GM12878 (cell line): ENCODE measurements at regions of chr6 and their contacts with region 1.

Region 1: GRCh38 chr6:137707590-137708360 is 159.3 kb upstream of the TNFAIP3 start:
- DNase-seq: peak; percentile 97
- ATAC-seq: peak; percentile 75
- H3K4me3 ChIP-seq: peak overlapping the region; percentile 49; the same call in 1 of the 2 replicates
- H3K27ac ChIP-seq: peak overlapping the region; percentile 64
- H3K4me1 ChIP-seq: peaks cover 39% of the 10 kb centered on the region
- H3K27me3 ChIP-seq: no peaks in the 10 kb centered on the region
- CTCF ChIP-seq: peak; percentile 67 to 88 (median 83); a peak in 5 of 6 replicates
- EP300 ChIP-seq: peak; percentile 33 to 57; a peak in 2 of 4 replicates
- POLR2A ChIP-seq: no peak
- RAD21 ChIP-seq: peak; percentile 91

Region 2: DNA sequence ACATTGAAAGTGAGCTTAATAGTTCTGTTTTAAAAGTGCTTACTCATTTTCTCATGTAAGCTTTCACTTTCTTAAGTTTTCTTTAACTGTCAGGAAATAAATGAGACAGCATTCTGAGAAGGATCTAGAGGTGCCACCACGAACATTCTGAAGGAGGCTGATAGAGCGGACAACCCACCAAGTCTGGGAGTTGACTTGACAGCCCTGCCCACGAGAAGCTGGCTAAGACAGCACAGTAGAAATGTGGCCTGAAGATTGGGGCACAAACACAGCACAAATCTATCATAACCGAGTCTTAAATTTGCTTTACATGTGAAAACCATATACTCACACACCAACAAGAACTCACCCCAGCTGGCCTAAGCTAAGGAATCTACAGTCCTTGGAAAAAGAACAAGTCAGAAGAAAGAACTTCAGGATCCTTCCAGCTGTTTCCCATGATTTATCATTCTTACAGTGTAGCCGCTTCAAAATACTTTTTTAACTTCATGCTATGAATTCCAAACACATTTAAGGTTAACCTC is 15.0 kb after region 1 on chr6:
- CTCF ChIA-PET with region 1: interaction called, 16 read pairs
- POLR2A ChIA-PET with region 1: interaction called, 4 read pairs
- RAD21 ChIA-PET with region 1: interaction called, 10 read pairs
- SMC1A ChIA-PET with region 1: interaction called, 12 read pairs
- in situ Hi-C with region 1: no loop called
- intact Hi-C with region 1: no loop called
- DNase-seq: no peak
- ATAC-seq: peak; percentile 66
- H3K4me3 ChIP-seq: 0 out of 2 replicates have a peak overlapping the region, but pooled peaks have one; percentile 3
- H3K27ac ChIP-seq: peak overlapping the region; percentile 62
- H3K4me1 ChIP-seq: peaks cover 9% of the 10 kb centered on the region
- H3K27me3 ChIP-seq: no peaks in the 10 kb centered on the region
- CTCF ChIP-seq: no peak
- EP300 ChIP-seq: no peak
- POLR2A ChIP-seq: no peak
- RAD21 ChIP-seq: no peak

Region 3: DNA sequence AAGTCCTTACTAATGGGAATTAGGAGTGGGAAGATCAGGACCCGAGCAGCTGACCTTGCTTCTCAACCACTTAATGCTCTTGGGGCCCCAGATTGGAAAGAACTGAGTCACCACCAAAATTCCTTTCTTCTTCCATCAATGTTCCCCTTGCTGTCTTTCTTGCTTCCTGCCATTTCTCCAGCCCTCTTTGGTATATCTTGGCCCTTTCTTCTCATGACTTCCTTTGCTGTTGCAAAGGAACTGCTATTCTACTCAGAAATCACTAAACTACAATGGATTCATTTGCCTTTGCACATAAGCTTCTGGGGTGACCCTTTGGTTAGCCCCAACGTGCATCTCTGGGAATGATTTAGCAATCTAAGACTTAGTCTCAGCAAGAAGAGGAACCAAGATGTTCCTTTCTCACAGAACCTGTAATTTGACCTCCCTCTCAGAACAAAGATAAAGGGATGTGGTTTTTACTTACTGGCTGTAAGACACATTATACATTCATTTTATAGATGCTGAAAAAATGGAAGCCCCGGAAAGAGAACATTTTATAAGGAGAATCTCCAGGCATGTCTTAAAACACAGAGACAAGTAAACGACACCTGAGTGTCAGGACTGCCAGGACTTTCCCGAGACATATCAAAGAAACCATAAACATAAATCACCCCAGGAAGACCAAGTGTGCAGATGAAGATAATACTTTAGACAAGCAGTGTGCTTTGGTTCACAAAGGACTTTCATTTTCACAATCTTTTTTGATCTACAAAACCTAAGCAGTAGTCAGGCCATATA is 60.3 kb after region 1 on chr6:
- CTCF ChIA-PET with region 1: interaction called, 5 read pairs
- POLR2A ChIA-PET with region 1: interaction called, 3 read pairs
- RAD21 ChIA-PET with region 1: interaction called, 4 read pairs
- SMC1A ChIA-PET with region 1: interaction called, 5 read pairs
- in situ Hi-C with region 1: no loop called
- intact Hi-C with region 1: loop called (anchors 2 kb)
- DNase-seq: peak; percentile 79
- ATAC-seq: peak; percentile 85
- H3K4me3 ChIP-seq: peak overlapping the region; percentile 13
- H3K27ac ChIP-seq: peak overlapping the region; percentile 92
- H3K4me1 ChIP-seq: peaks cover 26% of the 10 kb centered on the region
- H3K27me3 ChIP-seq: no peaks in the 10 kb centered on the region
- CTCF ChIP-seq: no peak
- EP300 ChIP-seq: peak; percentile 54 to 63; a peak in 3 of 4 replicates
- POLR2A ChIP-seq: no peak
- RAD21 ChIP-seq: no peak

Region 4: GRCh38 chr6:137823826-137824555 is 116.2 kb after region 1 on chr6:
- CTCF ChIA-PET with region 1: interaction called, 3 read pairs
- POLR2A ChIA-PET with region 1: interaction called, 3 read pairs
- RAD21 ChIA-PET with region 1: interaction called, 12 read pairs
- SMC1A ChIA-PET with region 1: interaction called, 13 read pairs
- in situ Hi-C with region 1: no loop called
- intact Hi-C with region 1: no loop called
- DNase-seq: no peak
- ATAC-seq: peak; percentile 21
- H3K4me3 ChIP-seq: no peak overlapping the region
- H3K27ac ChIP-seq: no peak overlapping the region; the same call in 1 of the 2 replicates
- H3K4me1 ChIP-seq: peaks cover 32% of the 10 kb centered on the region
- H3K27me3 ChIP-seq: no peaks in the 10 kb centered on the region
- CTCF ChIP-seq: no peak
- EP300 ChIP-seq: no peak
- POLR2A ChIP-seq: no peak
- RAD21 ChIP-seq: no peak

Region 5: GRCh38 chr6:137846772-137847313 is 139.1 kb after region 1 on chr6:
- CTCF ChIA-PET with region 1: no interaction called
- POLR2A ChIA-PET with region 1: no interaction called
- RAD21 ChIA-PET with region 1: no interaction called
- SMC1A ChIA-PET with region 1: no interaction called
- in situ Hi-C with region 1: no loop called
- intact Hi-C with region 1: no loop called
- DNase-seq: no peak
- ATAC-seq: peak; percentile 79
- H3K4me3 ChIP-seq: no peak overlapping the region
- H3K27ac ChIP-seq: no peak overlapping the region
- H3K4me1 ChIP-seq: peaks cover 20% of the 10 kb centered on the region
- H3K27me3 ChIP-seq: no peaks in the 10 kb centered on the region
- CTCF ChIP-seq: no peak
- EP300 ChIP-seq: no peak
- POLR2A ChIP-seq: no peak
- RAD21 ChIP-seq: no peak

Region 6: DNA sequence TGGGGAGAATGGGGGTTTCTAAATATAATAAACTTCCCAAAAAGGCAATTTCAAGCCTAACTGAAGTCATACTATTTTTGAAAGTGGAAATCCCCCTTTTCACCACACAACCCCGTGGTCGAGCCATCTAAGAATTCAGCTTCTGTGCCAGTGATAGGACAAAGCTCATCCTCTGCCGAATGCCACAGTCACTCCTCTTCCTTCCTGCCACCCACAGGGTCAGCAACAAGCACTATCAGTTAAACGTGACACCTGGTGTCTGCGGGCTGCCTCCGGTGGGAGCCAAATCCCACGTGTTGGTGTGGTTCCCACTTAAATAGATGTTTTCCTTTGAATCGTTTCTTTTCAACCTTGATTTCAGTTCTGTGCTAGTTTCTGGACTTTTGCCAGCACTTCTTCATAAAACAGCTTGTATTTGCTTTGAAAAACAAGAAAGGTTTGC is 220.0 kb after region 1 on chr6:
- CTCF ChIA-PET with region 1: interaction called, 5 read pairs
- POLR2A ChIA-PET with region 1: interaction called, 3 read pairs
- RAD21 ChIA-PET with region 1: interaction called, 6 read pairs
- SMC1A ChIA-PET with region 1: interaction called, 6 read pairs
- in situ Hi-C with region 1: no loop called
- intact Hi-C with region 1: loop called (anchors 5 kb)
- DNase-seq: peak; percentile 99
- ATAC-seq: peak; percentile 93
- H3K4me3 ChIP-seq: peak overlapping the region; percentile 19; the same call in 1 of the 2 replicates
- H3K27ac ChIP-seq: peak overlapping the region; percentile 98
- H3K4me1 ChIP-seq: peaks cover 61% of the 10 kb centered on the region
- H3K27me3 ChIP-seq: no peaks in the 10 kb centered on the region
- CTCF ChIP-seq: no peak
- EP300 ChIP-seq: peak; percentile 91; a peak in 3 of 4 replicates
- POLR2A ChIP-seq: peak; percentile 69; the same call in 1 of the 2 replicates
- RAD21 ChIP-seq: 0 out of 2 replicates have a peak, but pooled peaks have one; percentile 4

Region 7: DNA sequence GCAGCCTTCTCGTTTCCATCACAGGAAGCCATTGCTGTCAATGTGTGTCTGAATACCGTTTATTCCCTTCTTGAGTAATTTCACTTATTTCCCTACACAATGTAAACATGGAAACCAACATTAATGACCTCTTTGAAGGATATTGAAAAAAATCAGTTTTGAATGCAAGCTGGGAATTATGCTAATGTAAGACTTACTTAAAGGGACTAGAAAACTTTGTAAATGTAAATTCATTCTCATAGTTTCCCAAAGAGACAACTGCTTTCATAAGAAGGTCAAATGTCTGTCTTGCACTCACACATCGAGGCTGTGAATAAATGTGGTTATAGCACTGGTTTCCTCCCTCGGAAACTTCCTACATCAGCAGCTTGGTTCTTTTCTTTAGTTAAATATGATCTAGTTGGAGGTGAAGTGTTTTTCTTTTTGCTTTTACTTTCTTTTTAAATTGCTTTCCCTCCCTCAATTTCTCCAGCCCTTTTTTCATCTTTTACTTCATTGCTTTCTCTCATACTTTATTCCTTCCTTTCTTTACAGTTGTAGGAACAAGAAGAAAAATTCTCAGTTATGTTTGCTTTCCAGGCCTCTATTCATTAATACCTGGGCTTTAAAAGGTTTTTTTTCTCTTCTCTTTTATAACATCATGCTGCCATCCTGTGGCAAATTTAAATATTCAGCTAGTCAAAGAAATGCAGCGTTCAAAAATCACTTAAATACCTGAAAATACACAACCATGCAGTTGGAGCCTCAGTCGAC is 267.6 kb after region 1 on chr6:
- CTCF ChIA-PET with region 1: interaction called, 59 read pairs
- POLR2A ChIA-PET with region 1: no interaction called
- RAD21 ChIA-PET with region 1: interaction called, 44 read pairs
- SMC1A ChIA-PET with region 1: interaction called, 43 read pairs
- in situ Hi-C with region 1: no loop called
- intact Hi-C with region 1: loop called (anchors 1 kb)
- DNase-seq: peak; percentile 53
- ATAC-seq: peak; percentile 67
- H3K4me3 ChIP-seq: peak overlapping the region; percentile 1; the same call in 1 of the 2 replicates
- H3K27ac ChIP-seq: peak overlapping the region; percentile 34
- H3K4me1 ChIP-seq: peaks cover 36% of the 10 kb centered on the region
- H3K27me3 ChIP-seq: no peaks in the 10 kb centered on the region
- CTCF ChIP-seq: peak; percentile 23 to 62 (median 44); a peak in 5 of 6 replicates
- EP300 ChIP-seq: no peak
- POLR2A ChIP-seq: no peak
- RAD21 ChIP-seq: peak; percentile 81